Naive thymus-derived CD4-positive, alpha-beta T cell (primary cell): ENCODE measurements at regions of chr17 and their contacts with region 1.

Region 1: GRCh38 chr17:58447039-58447975 is 30.0 kb upstream of the RNF43 start:
- DNase-seq: peak; percentile 11 to 70 (median 36)
- ATAC-seq: peak; percentile 79
- H3K4me3 ChIP-seq: no peak overlapping the region
- H3K4me3 Mint-ChIP-seq: no peak overlapping the region
- H3K27ac ChIP-seq: no peak overlapping the region
- H3K27ac Mint-ChIP-seq: no peak overlapping the region
- H3K4me1 ChIP-seq: no peaks in the 10 kb centered on the region
- H3K4me1 Mint-ChIP-seq: peaks cover 0 to 11% (median 4%) of the 10 kb centered on the region in 7 donors
- H3K27me3 ChIP-seq: no peaks in the 10 kb centered on the region
- H3K27me3 Mint-ChIP-seq: peaks cover 0 to 4% (median 0%) of the 10 kb centered on the region in 5 donors

Region 2: DNA sequence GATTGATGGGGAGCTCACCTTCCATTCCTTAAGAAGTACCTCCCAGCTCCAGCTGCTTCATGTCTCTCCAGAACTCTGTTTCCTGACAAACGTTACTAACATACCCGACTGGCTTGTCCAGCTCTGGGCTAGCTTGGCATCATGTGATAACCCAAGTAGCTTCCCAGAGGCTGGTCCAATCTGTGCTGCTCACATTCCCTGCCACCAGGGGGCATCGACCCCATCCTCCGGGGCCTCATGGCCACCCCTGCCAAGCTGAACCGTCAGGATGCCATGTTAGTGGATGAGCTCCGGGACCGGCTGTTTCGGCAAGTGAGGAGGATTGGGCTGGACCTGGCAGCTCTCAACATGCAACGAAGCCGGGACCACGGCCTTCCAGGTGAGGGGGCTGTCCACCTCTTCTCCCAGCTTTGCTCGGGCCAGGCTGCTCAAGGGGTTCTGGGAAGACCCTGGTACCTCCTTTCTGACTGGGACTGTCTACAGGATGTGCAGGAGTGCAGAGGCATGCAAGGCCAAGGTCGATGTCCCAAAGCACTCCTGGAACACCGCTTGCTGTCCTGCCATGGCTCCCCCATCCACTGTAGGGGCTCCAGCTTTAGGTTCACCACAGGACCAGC is 247.2 kb before region 1 on chr17:
- CTCF ChIA-PET with region 1: interaction called, 3 read pairs
- POLR2A ChIA-PET with region 1: no interaction called
- intact Hi-C with region 1: loop called (anchors 1 kb)
- DNase-seq: peak in 8 of 9 donors; percentile 20 to 56 (median 38)
- ATAC-seq: peak; percentile 87
- H3K4me3 ChIP-seq: no peak overlapping the region
- H3K4me3 Mint-ChIP-seq: no peak overlapping the region
- H3K27ac ChIP-seq: no peak overlapping the region
- H3K27ac Mint-ChIP-seq: no peak overlapping the region
- H3K4me1 ChIP-seq: no peaks in the 10 kb centered on the region
- H3K4me1 Mint-ChIP-seq: peaks cover 0 to 4% (median 0%) of the 10 kb centered on the region in 7 donors
- H3K27me3 ChIP-seq: no peaks in the 10 kb centered on the region
- H3K27me3 Mint-ChIP-seq: peaks cover 0 to 10% (median 2%) of the 10 kb centered on the region in 5 donors

Region 3: DNA sequence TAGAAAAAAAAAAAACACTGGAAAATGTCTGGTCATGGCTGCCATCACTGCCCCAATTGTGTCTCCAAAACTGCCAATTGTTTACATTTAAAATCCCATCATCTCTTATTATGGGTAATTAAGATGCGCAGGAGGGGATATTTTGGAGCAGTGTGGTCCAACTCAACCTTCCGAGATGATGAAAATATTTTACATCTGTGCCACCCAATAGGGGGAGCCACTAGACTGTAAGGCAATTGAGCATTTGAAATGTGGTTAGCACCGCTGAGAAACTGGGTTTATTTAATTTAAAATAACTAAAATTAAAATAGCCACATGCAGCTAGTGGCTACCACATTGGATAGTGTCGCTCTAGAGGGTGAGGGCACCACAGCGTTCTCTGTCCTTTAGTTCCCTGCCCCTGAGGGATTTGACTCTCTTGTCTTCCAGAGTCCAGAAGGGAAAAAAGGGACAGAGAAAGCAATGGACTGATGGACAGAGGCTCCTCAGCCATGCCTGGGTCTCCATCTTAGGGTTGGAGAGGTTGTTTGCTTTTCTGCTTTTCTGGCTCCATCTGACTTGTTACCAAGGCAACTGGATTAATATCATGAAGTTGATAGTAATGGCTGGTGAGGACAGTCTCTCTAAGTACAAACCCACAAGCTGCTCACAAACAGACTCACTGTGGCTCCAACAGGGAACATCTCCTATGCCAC is 170.1 kb before region 1 on chr17:
- CTCF ChIA-PET with region 1: no interaction called
- POLR2A ChIA-PET with region 1: no interaction called
- intact Hi-C with region 1: loop called in 1 of 2 experiments (anchors 1 kb)
- DNase-seq: peak in 2 of 9 donors; percentile 7 to 22
- ATAC-seq: no peak
- H3K4me3 ChIP-seq: no peak overlapping the region
- H3K4me3 Mint-ChIP-seq: no peak overlapping the region
- H3K27ac ChIP-seq: no peak overlapping the region
- H3K27ac Mint-ChIP-seq: no peak overlapping the region
- H3K4me1 ChIP-seq: no peaks in the 10 kb centered on the region
- H3K4me1 Mint-ChIP-seq: peaks cover 0 to 11% (median 5%) of the 10 kb centered on the region in 7 donors
- H3K27me3 ChIP-seq: no peaks in the 10 kb centered on the region
- H3K27me3 Mint-ChIP-seq: peaks cover 0 to 29% (median 21%) of the 10 kb centered on the region in 5 donors

Region 4: DNA sequence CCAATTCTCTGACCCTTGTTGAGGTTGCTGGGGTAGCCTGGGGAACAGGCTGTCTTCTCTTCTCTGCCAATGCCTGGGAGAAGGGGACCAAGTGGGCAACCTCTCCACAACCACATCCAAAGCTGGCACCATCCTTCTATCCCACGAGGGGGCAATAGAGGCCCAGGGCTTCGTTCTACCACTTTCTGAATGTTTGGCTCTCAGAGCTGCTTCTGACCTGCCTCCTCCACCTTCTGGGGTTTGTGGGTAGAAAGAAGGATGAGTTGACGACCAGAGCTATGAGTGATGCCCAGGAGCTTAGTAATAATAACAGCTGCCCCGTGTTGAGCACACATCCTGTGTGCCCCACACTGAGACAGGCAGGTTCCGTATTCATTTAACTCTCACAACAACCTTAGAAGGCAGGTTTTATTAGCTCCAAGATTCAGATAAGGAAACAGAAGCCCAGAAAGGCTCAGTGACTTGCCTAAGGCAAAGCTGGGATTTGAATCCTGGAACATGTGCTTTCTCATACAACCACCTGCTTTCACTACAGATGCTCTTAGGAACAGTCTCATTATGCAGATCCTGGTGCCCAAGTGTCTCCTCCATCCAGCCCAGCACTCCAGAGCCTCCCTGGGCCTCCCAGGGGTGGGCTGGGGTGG is 129.8 kb before region 1 on chr17:
- CTCF ChIA-PET with region 1: interaction called, 5 read pairs
- POLR2A ChIA-PET with region 1: no interaction called
- intact Hi-C with region 1: loop called (anchors 1 kb)
- DNase-seq: peak; percentile 44 to 83 (median 77)
- ATAC-seq: peak; percentile 95
- H3K4me3 ChIP-seq: no peak overlapping the region
- H3K4me3 Mint-ChIP-seq: peak overlapping the region in 4 of 10 donors; percentile 4 to 58 (median 28)
- H3K27ac ChIP-seq: peak overlapping the region; percentile 47
- H3K27ac Mint-ChIP-seq: peak overlapping the region; percentile 58 to 94 (median 84)
- H3K4me1 ChIP-seq: peaks cover 11 to 12% of the 10 kb centered on the region in 2 donors
- H3K4me1 Mint-ChIP-seq: peaks cover 10 to 26% (median 13%) of the 10 kb centered on the region in 7 donors
- H3K27me3 ChIP-seq: no peaks in the 10 kb centered on the region
- H3K27me3 Mint-ChIP-seq: no peaks in the 10 kb centered on the region

Region 5: DNA sequence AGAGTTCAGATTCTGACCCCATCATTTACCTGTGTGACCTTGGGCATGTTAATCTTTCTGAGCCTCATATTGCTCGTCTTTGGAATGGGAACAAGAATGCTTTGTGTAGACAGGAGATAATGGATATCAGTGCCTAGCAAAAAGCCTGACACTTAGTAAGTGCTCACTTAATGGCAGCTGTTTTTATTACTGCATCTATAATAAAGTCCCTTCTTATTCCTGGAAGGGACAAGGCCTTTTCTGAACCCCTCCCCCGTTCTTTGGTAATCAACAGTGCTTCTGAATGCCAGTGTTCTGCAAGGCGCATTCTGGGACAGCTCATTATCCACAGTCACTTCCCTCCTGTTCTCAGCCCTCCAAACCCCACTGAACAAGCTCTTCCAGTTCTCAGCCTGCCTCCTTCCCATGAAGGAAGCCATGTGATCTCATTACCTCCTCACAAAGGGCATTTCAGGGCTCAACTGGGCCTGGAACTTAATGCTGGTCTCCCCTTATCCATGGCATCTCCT is 70.2 kb before region 1 on chr17:
- CTCF ChIA-PET with region 1: no interaction called
- POLR2A ChIA-PET with region 1: no interaction called
- intact Hi-C with region 1: loop called (anchors 1 to 10 kb)
- DNase-seq: no peak
- ATAC-seq: no peak
- H3K4me3 ChIP-seq: no peak overlapping the region
- H3K4me3 Mint-ChIP-seq: no peak overlapping the region
- H3K27ac ChIP-seq: no peak overlapping the region
- H3K27ac Mint-ChIP-seq: no peak overlapping the region
- H3K4me1 ChIP-seq: peaks cover 10 to 28% of the 10 kb centered on the region in 2 donors
- H3K4me1 Mint-ChIP-seq: peaks cover 27 to 50% (median 46%) of the 10 kb centered on the region in 7 donors
- H3K27me3 ChIP-seq: no peaks in the 10 kb centered on the region
- H3K27me3 Mint-ChIP-seq: no peaks in the 10 kb centered on the region